ENCODE measurements at regions of chrX and their contacts with region 1.

Region 1: DNA sequence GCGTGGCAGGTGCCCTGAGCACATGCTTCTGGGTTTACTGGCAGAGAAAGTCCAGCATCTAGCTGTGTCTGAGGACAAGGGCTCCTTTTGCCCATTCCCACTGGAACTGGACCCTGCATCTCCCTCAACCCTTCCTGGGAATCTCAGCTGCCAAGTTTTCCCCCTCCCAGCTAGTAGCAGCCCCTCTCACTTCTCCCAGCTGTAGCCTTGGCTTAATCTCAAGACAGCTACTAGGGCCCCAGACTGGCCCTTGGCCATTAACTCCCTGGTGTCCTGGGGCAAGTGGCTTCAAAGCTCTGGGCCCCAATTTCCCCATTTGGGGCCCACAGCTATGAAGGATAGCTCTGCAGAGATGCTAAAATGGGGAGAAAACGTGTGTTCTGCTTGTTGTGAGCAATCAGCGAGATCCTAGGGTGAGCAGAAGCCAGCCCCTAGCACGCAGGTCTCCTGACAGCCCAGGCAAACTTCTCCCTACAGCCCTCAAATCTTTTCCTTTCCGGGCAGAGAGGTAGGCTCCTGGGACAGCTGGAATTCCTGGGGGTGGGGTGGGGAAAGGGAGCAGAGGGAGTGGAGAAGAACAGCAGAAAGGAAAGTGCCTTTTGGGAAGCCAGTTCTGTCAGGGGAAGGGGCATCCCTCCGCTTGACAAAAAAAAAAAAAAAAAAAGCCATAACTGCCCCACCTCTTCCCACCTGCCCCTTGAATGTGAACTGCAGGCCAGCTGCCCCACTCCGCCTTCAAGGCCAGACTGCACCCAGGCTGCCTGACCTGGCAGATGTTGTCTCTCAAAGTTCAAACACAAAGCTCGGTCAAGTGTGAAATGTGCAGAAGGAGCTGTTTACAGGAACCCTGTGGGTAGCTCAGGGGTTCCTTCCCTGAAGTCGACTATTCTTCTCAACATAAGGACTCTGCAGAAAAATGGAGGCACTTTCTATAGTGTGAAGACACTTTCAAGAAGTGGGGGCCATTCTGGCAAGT is 16.6 kb downstream of the FGD1 start:
- DNase-seq: no peak
- ATAC-seq: no peak
- H3K4me3 ChIP-seq: no peak overlapping the region
- H3K4me3 Mint-ChIP-seq: no peak overlapping the region
- H3K27ac ChIP-seq: no peak overlapping the region
- H3K27ac Mint-ChIP-seq: no peak overlapping the region
- H3K4me1 ChIP-seq: no peaks in the 10 kb centered on the region
- H3K4me1 Mint-ChIP-seq: no peaks in the 10 kb centered on the region
- H3K27me3 ChIP-seq: no peaks in the 10 kb centered on the region
- H3K27me3 Mint-ChIP-seq: no peaks in the 10 kb centered on the region
- CTCF ChIP-seq: no peak

Region 2: GRCh38 chrX:54066841-54067240 is 412.6 kb before region 1 on chrX:
- CTCF ChIA-PET with region 1: no interaction called
- POLR2A ChIA-PET with region 1: no interaction called
- intact Hi-C with region 1: loop called in 1 of 2 experiments (anchors 10 kb)
- DNase-seq: no peak
- ATAC-seq: no peak
- H3K4me3 ChIP-seq: no peak overlapping the region
- H3K4me3 Mint-ChIP-seq: no peak overlapping the region
- H3K27ac ChIP-seq: no peak overlapping the region
- H3K27ac Mint-ChIP-seq: no peak overlapping the region
- H3K4me1 ChIP-seq: no peaks in the 10 kb centered on the region
- H3K4me1 Mint-ChIP-seq: no peaks in the 10 kb centered on the region
- H3K27me3 ChIP-seq: no peaks in the 10 kb centered on the region
- H3K27me3 Mint-ChIP-seq: no peaks in the 10 kb centered on the region
- CTCF ChIP-seq: no peak

Measured in CD8-positive, alpha-beta T cell (primary cell).